Activated CD4-positive, alpha-beta T cell treated with anti-CD3 and anti-CD28 coated beads for 36 hours (primary cell): ENCODE measurements at regions of chr21 and their contacts with region 1.

Region 1: GRCh38 chr21:43975495-43975993 is 36.6 kb upstream of the TRAPPC10 start:
- DNase-seq: peak; percentile 92
- ATAC-seq: peak; percentile 94
- H3K4me3 Mint-ChIP-seq: no peak overlapping the region
- H3K27ac Mint-ChIP-seq: peak overlapping the region; percentile 86
- H3K4me1 Mint-ChIP-seq: peaks cover 9% of the 10 kb centered on the region
- H3K27me3 Mint-ChIP-seq: no peaks in the 10 kb centered on the region

Region 2: DNA sequence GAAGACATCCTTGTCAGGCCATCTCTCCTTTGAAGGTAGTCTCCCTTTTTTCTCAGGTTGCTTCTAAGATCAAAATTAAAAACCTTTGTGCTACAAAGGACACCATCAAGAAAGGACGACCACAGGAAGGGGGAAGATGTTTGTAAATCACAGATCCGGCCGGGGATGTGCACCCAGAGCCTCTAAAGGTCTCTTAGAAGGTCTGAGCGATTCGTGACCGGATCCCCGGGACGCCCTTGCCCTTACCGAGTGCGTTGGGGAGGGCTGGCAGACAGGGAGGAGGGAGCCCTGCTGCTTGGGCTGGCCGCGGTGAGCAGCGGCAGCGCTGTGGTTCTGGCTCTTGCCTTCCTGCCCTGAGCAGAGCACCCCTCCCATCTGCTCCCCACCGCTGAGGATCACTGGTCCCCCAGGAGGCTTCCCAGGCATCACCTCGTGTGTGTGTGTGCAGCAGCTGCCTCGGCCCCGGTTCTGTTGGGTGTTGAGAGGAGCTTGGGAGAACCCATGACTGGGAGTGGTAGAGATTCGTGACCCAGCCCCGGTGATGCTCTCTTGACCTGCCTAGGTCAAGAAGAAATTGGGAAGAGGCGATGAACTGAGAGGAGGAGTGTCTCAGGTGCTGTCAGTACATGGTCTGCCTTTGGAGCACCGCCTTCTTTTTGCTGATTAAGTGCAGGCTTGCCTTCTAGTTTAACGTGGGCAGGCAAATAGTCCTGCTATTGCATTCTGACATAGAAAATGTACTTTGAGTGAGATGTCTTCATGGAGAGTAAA is 76.1 kb before region 1 on chr21:
- CTCF ChIA-PET with region 1: no interaction called
- POLR2A ChIA-PET with region 1: no interaction called
- intact Hi-C with region 1: no loop called
- DNase-seq: no peak
- ATAC-seq: no peak
- H3K4me3 Mint-ChIP-seq: no peak overlapping the region
- H3K27ac Mint-ChIP-seq: no peak overlapping the region
- H3K4me1 Mint-ChIP-seq: peaks cover 9% of the 10 kb centered on the region
- H3K27me3 Mint-ChIP-seq: no peaks in the 10 kb centered on the region

Region 3: GRCh38 chr21:44039828-44040227 is 64.3 kb after region 1 on chr21:
- CTCF ChIA-PET with region 1: no interaction called
- POLR2A ChIA-PET with region 1: no interaction called
- intact Hi-C with region 1: loop called in 1 of 2 experiments (anchors 5 kb)
- DNase-seq: no peak
- ATAC-seq: peak; percentile 73
- H3K4me3 Mint-ChIP-seq: no peak overlapping the region
- H3K27ac Mint-ChIP-seq: no peak overlapping the region
- H3K4me1 Mint-ChIP-seq: peaks cover 16% of the 10 kb centered on the region
- H3K27me3 Mint-ChIP-seq: no peaks in the 10 kb centered on the region